H1 (cell line): ENCODE measurements at regions of chr13 and their contacts with region 1.

Region 1: DNA sequence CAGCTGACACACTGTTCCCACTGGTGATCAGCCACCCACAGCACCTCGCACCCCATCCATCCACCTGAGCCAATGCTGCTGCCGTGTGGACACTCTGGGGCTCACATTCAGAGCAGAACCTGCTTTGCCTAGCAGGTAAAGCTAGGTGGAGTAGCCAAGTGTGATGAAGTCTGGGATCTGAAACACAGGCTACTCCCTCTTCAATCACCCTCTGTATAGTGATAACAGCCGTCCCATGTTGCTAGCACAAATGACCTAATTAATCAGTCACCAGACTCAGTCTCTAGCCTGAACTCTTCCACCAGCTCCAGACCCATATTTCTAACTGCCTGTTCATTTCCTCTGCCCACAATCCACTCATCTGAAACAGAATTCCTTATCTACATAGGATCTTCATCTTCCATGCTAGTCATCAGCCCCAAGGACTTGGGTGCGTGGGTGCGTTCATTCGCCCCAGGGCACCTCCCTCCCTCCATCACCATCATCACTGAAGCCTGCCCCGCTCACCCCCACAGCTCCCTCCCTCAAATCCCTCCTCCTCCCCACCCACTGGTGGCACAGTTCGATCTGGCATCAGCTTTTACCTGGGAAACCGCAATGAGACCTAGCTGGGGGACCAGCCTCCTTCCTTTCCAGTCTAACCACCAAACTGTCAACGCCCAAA is 19.8 kb downstream of the STK24 start:
- DNase-seq: no peak
- H3K4me3 ChIP-seq: no peak overlapping the region
- H3K27ac ChIP-seq: no peak overlapping the region
- H3K4me1 ChIP-seq: peaks cover 1 to 17% (median 7%) of the 10 kb centered on the region in 4 experiments; a peak in 6 of 7 replicates
- H3K27me3 ChIP-seq: no peaks in the 10 kb centered on the region
- CTCF ChIP-seq: peak; percentile 34 to 61 (median 52)
- EP300 ChIP-seq: no peak
- POLR2A ChIP-seq: no peak
- RAD21 ChIP-seq: peak; percentile 36 to 61; a peak in 3 of 4 replicates

Region 2: DNA sequence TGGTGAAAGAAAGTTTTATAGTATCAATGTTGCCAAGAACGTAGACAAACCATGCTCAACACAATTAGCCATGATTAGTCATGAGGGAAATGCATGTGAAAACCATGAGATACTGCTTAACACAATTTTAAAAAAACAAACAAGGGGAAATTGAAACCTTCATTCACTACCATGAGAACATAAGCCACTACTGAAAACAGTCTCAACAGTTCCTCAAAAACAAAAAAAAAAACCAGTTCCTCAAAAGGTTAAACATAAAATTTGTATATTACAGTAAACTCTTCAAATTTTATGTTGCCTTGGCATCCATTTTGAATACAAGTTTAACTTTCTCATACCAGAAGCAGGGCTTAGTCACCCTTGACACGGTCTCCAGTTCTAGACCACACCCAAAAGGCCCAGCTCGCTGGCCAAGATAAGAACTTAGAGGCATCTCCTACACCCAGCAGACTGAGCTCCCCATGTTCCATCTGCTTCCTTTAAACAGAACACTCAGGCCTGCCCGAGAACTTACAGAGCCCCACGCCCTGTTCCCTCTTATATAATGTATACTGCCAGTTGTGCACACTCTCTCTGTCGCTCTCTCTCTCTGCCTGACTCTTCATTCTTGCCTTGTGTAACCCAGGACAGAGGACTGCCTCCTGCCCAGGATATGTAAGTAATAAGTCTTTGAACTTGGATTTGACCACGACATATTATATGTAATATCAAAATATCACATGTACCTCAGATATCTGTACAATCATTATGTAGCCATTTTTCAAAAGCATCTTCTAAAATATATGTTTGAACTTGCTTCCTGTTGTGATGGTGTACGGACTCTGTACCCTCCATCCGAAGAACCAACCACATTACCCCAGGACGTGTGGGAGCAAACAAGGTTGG is 47.6 kb before region 1 on chr13:
- CTCF ChIA-PET with region 1: interaction called, 10 read pairs
- POLR2A ChIA-PET with region 1: no interaction called
- DNase-seq: no peak
- H3K4me3 ChIP-seq: no peak overlapping the region
- H3K27ac ChIP-seq: no peak overlapping the region
- H3K4me1 ChIP-seq: peaks cover 6 to 22% (median 17%) of the 10 kb centered on the region in 4 experiments
- H3K27me3 ChIP-seq: no peaks in the 10 kb centered on the region
- CTCF ChIP-seq: no peak
- EP300 ChIP-seq: no peak
- POLR2A ChIP-seq: no peak
- RAD21 ChIP-seq: no peak

Region 3: GRCh38 chr13:98542568-98543377 is 14.3 kb before region 1 on chr13:
- CTCF ChIA-PET with region 1: interaction called, 10 read pairs
- POLR2A ChIA-PET with region 1: no interaction called
- DNase-seq: no peak
- H3K4me3 ChIP-seq: no peak overlapping the region
- H3K27ac ChIP-seq: no peak overlapping the region
- H3K4me1 ChIP-seq: peaks cover 7 to 18% (median 12%) of the 10 kb centered on the region in 4 experiments
- H3K27me3 ChIP-seq: no peaks in the 10 kb centered on the region
- CTCF ChIP-seq: no peak
- EP300 ChIP-seq: no peak
- POLR2A ChIP-seq: no peak
- RAD21 ChIP-seq: no peak

Region 4: GRCh38 chr13:98664039-98664438 is 106.9 kb after region 1 on chr13:
- CTCF ChIA-PET with region 1: no interaction called
- POLR2A ChIA-PET with region 1: no interaction called
- DNase-seq: no peak
- H3K4me3 ChIP-seq: no peak overlapping the region
- H3K27ac ChIP-seq: no peak overlapping the region
- H3K4me1 ChIP-seq: no peaks in the 10 kb centered on the region
- H3K27me3 ChIP-seq: no peaks in the 10 kb centered on the region; a peak in 1 of 7 replicates
- CTCF ChIP-seq: no peak
- EP300 ChIP-seq: no peak
- POLR2A ChIP-seq: no peak
- RAD21 ChIP-seq: no peak

Region 5: DNA sequence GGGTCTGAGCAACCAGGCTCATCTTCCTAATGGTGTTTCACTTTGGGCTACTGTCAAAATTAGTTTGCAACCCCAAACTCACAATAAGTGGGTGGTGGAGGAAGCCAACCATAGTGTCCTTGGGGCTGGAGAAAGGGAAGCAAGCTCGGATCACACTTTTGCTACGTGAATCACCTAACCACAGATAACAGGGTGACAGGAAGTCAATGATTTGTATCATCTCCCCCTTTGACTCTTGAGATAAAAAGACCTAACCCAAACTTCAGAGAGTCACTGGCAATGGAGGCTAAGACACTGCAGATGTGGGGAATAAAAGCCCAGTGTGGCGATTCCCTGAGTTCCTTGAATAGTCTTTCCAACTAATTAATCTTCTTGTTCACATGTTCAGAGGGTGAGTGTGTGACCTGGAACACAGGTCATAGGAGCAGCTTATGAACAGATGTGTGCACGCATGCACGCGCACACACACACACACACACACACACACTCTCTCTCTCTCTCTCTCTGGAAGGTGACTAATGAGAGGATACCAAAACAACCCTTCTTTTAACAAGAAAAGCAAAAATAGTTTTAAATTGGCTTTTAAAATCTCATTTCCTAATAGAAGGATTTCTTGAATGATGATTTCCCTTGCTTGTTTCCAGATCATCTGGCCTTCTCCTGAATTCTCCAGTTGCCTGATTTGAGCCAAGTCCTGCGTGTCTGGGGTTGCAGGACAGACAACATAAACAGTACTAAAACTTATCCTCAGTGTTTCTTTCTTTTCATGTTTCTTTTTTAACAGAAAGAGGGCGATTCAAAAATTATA is 441.9 kb after region 1 on chr13:
- CTCF ChIA-PET with region 1: no interaction called
- POLR2A ChIA-PET with region 1: no interaction called
- DNase-seq: no peak
- H3K4me3 ChIP-seq: no peak overlapping the region
- H3K27ac ChIP-seq: no peak overlapping the region
- H3K4me1 ChIP-seq: peaks cover 0 to 15% (median 7%) of the 10 kb centered on the region in 4 experiments; a peak in 4 of 7 replicates
- H3K27me3 ChIP-seq: no peaks in the 10 kb centered on the region
- CTCF ChIP-seq: no peak
- EP300 ChIP-seq: no peak
- POLR2A ChIP-seq: no peak
- RAD21 ChIP-seq: no peak